ENCODE measurements at regions of chr9 and their contacts with region 1.

Region 1: GRCh38 chr9:72952914-72953313 is at the start of gene ALDH1A1:
- DNase-seq: peak; percentile 73
- H3K4me3 ChIP-seq: peak within 1 kb of the TSS; percentile 43 to 84 (median 54)
- H3K27ac ChIP-seq: peak within 1 kb of the TSS; percentile 65
- H3K4me1 ChIP-seq: peaks cover 7% of the 10 kb centered on the region
- H3K27me3 ChIP-seq: no peaks in the 10 kb centered on the region
- CTCF ChIP-seq: no peak
- POLR2A ChIP-seq: peak; percentile 55
- total RNA-seq, gene ALDH1A1: 220 and 287 TPM in 2 replicates

Region 2: GRCh38 chr9:72925126-72925789 is 27.7 kb before region 1 on chr9:
- CTCF ChIA-PET with region 1: interaction called, 3 read pairs
- POLR2A ChIA-PET with region 1: no interaction called
- dilution Hi-C with region 1: no loop called
- intact Hi-C with region 1: loop called (anchors 2 kb)
- DNase-seq: peak; percentile 91
- H3K4me3 ChIP-seq: no peak overlapping the region
- H3K27ac ChIP-seq: peak overlapping the region; percentile 57
- H3K4me1 ChIP-seq: peaks cover 16% of the 10 kb centered on the region
- H3K27me3 ChIP-seq: no peaks in the 10 kb centered on the region
- CTCF ChIP-seq: no peak
- POLR2A ChIP-seq: no peak

Region 3: DNA sequence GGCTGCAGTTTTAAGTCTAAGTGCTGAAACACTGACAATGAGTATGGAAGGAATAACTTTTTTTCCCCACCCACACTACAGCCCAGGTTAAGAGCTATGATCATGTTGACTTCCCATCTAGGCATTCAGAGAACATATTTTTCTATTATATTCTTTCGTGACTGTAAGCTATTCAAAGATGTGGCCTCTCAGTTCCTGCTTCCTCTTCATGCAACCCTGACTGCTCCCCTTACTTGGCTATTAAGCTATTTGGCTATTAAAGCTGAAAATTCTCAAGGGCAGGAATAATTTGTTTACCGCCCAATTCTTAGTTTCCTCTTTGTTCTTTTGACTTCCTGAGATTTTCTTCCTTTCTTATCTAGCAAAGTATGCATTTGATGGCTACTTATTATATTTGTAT is 18.5 kb after region 1 on chr9:
- CTCF ChIA-PET with region 1: interaction called, 6 read pairs
- POLR2A ChIA-PET with region 1: no interaction called
- dilution Hi-C with region 1: no loop called
- intact Hi-C with region 1: loop called (anchors 2 kb)
- DNase-seq: peak; percentile 87
- H3K4me3 ChIP-seq: no peak overlapping the region
- H3K27ac ChIP-seq: peak overlapping the region; percentile 72
- H3K4me1 ChIP-seq: peaks cover 18% of the 10 kb centered on the region
- H3K27me3 ChIP-seq: no peaks in the 10 kb centered on the region
- CTCF ChIP-seq: no peak
- POLR2A ChIP-seq: no peak

Region 4: DNA sequence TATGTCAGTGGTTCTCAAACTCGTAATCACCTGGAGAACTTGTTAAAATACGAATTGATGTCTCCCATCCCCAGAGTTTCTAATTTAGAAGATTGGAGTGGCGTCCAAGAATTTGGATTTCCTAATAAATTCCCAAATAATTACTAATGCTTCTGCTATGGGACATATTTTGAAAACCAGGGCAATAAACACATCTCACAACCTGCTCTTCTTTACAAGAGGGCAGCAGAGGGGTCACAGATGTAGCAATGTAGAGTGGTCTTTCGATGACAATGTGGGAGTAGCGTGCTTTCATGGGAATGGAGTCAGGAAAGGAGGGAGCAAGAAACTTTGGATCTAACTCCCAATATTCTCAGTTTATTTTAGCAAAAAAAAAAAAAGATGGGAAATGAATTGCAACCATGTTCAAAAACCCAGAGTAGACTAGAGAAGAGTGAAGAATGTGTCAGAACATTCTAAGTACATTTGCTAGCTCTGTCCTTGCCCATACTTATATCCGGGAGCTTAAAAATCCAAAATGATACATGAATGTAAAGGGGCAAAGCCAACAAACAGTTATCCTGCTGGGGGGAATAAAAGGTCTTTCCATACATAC is 33.7 kb after region 1 on chr9:
- CTCF ChIA-PET with region 1: no interaction called
- POLR2A ChIA-PET with region 1: no interaction called
- dilution Hi-C with region 1: no loop called
- intact Hi-C with region 1: loop called (anchors 2 kb)
- DNase-seq: no peak
- H3K4me3 ChIP-seq: no peak overlapping the region
- H3K27ac ChIP-seq: peak overlapping the region; percentile 94
- H3K4me1 ChIP-seq: peaks cover 16% of the 10 kb centered on the region
- H3K27me3 ChIP-seq: no peaks in the 10 kb centered on the region
- CTCF ChIP-seq: no peak
- POLR2A ChIP-seq: no peak

Region 5: GRCh38 chr9:72997387-72997995 is 44.6 kb after region 1 on chr9:
- CTCF ChIA-PET with region 1: interaction called, 3 read pairs
- POLR2A ChIA-PET with region 1: no interaction called
- dilution Hi-C with region 1: no loop called
- intact Hi-C with region 1: loop called (anchors 1 kb)
- DNase-seq: peak; percentile 89
- H3K4me3 ChIP-seq: peak overlapping the region in 2 of 3 experiments; percentile 17 to 57
- H3K27ac ChIP-seq: peak overlapping the region; percentile 100
- H3K4me1 ChIP-seq: peaks cover 38% of the 10 kb centered on the region
- H3K27me3 ChIP-seq: no peaks in the 10 kb centered on the region
- CTCF ChIP-seq: no peak
- POLR2A ChIP-seq: peak; percentile 71

Region 6: GRCh38 chr9:73009649-73010288 is 56.9 kb after region 1 on chr9:
- CTCF ChIA-PET with region 1: no interaction called
- POLR2A ChIA-PET with region 1: interaction called, 3 read pairs
- dilution Hi-C with region 1: no loop called
- intact Hi-C with region 1: loop called (anchors 2 kb)
- DNase-seq: no peak
- H3K4me3 ChIP-seq: no peak overlapping the region
- H3K27ac ChIP-seq: no peak overlapping the region
- H3K4me1 ChIP-seq: peaks cover 38% of the 10 kb centered on the region
- H3K27me3 ChIP-seq: no peaks in the 10 kb centered on the region
- CTCF ChIP-seq: no peak
- POLR2A ChIP-seq: no peak

Region 7: DNA sequence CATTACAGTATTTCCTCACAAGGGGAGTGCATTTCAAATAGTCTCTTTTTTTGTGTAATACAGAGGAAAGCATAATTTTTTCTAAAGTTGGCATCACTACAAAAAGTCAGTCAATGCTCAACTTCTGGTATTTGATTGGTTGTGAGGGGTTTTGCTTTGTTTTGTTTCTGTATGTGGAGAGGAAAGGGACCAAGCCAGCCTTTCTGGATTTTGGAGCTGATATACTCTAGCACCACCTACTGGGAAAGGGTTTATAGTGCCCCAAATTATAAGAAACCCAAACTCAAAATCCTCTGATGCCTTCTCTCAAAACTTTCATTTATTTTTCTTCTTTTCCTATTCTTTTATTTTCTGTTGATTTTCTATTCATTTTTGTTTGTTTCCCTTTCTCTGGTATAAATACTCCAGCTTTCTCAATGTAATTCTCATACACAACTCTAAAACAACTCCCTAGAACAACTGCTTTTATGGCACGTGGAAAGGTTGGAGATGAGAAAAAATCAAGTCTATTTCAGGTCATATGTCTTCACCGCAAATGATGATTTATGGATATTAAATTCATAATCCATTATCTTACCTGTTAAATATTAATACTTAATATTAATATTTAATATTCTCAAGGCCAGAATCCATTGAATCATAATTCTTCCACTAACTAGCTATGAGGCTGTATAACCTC is 129.2 kb after region 1 on chr9:
- CTCF ChIA-PET with region 1: interaction called, 5 read pairs
- POLR2A ChIA-PET with region 1: no interaction called
- dilution Hi-C with region 1: no loop called
- intact Hi-C with region 1: loop called (anchors 2 kb)
- DNase-seq: peak; percentile 90
- H3K4me3 ChIP-seq: no peak overlapping the region
- H3K27ac ChIP-seq: no peak overlapping the region
- H3K4me1 ChIP-seq: peaks cover 2% of the 10 kb centered on the region
- H3K27me3 ChIP-seq: no peaks in the 10 kb centered on the region
- CTCF ChIP-seq: peak; percentile 61 to 74
- POLR2A ChIP-seq: no peak

Measured in endothelial cell of umbilical vein (primary cell).